GM10248 (cell line): ENCODE measurements at regions of chr22 and their contacts with region 1.

Region 1: GRCh38 chr22:22181341-22181850 is 63.2 kb upstream of the VPREB1 start:
- DNase-seq: no peak
- CTCF ChIP-seq: no peak

Region 2: DNA sequence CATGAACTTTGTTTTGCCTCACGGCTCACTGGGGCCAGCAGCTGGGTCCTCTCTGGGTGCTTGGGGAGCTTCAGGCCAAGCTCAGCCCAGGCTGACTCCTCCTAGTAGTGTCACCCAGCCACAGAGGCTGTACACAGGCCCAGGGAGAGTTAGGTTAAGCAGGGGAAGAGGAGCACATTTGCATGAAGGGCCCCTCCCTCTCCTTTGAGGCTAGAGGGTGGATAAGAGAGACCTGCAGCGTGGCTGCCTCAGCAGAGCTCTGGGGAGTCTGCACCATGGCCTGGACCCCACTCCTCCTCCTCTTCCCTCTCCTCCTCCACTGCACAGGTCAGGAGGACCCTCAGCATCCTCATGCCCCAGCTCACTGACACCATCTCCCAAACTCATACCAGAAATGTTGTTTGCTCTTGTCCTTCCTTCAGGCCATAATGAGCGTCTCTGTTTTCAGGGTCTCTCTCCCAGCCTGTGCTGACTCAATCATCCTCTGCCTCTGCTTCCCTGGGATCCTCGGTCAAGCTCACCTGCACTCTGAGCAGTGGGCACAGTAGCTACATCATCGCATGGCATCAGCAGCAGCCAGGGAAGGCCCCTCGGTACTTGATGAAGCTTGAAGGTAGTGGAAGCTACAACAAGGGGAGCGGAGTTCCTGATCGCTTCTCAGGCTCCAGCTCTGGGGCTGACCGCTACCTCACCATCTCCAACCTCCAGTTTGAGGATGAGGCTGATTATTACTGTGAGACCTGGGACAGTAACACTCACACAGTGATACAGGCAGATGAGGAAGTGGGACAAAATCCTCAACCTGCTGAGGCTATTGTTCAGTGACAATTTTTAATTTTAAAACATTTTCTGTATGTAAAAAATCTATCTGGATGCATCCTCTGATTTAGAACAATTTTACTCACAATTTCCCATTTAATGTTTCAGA is 19.2 kb before region 1 on chr22:
- CTCF ChIA-PET with region 1: interaction called, 11 read pairs
- POLR2A ChIA-PET with region 1: no interaction called
- DNase-seq: peak; percentile 81
- CTCF ChIP-seq: no peak

Region 3: DNA sequence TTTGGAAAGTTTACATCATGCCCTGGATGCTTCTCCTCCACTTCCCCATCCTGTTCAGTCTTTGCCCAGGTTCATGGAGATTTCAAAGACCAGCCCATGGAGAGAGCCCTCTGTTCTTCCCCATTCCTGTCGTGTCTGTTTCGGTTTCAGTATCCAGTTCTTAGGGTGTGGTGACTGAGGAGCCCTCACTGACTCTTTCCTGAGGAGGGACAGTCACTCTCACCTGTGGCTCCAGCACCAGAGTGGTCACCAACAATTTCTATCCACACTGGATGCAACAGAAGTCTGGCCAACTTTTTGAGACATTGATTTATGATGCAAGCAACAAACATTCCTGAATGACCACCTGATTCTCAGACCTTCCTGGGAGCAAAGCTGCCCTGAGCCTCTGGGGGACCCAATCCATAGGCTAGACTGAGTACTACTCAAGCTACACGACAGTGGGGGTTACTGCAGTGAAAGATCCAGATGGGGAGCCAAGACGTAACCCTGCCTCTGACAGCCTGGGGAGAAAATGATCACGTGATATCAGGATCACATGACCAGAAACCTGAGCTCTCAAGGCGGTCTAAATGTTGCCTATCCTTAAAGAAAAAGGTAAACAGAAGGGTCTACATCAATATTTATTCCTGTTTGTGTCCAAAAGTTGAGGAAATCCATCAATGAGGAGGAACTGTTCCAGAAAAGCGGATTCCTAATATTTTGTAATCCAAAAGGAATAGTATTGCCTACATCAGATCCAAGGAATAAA is 13.0 kb before region 1 on chr22:
- CTCF ChIA-PET with region 1: interaction called, 15 read pairs
- POLR2A ChIA-PET with region 1: no interaction called
- DNase-seq: peak; percentile 62
- CTCF ChIP-seq: no peak

Region 4: GRCh38 chr22:22195265-22196017 is 14.0 kb after region 1 on chr22:
- CTCF ChIA-PET with region 1: interaction called, 61 read pairs
- POLR2A ChIA-PET with region 1: no interaction called
- DNase-seq: peak; percentile 87
- CTCF ChIP-seq: peak; percentile 91

Region 5: GRCh38 chr22:22235558-22235957 is 54.2 kb after region 1 on chr22:
- CTCF ChIA-PET with region 1: interaction called, 17 read pairs
- POLR2A ChIA-PET with region 1: no interaction called
- DNase-seq: peak; percentile 70
- CTCF ChIP-seq: peak; percentile 70